Mammary epithelial cell (primary cell): ENCODE measurements at regions of chr12 and their contacts with region 1.

Region 1: DNA sequence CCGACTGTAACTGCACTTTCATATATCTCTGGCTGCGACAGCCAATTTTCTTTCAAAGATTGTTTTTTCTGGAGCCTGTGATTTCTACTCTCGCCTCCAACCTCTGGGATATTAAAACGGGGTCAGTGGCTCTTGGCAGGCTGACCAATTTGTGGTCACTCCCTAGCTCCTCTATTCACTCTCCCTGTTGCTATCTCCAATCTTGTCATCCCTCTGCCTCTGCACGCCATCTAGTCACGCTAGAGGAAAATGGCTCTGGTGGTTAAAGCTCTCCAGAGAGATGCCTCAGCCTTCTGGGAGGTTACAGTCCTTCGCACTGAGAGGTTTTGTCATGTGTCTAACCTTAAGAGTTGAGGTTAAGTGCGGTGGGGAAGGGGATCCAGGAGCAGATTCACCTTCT is 59.8 kb upstream of the CISTR start:
- DNase-seq: no peak
- H3K4me3 ChIP-seq: no peak overlapping the region
- H3K27ac ChIP-seq: no peak overlapping the region
- H3K4me1 ChIP-seq: peaks cover 5% of the 10 kb centered on the region
- H3K27me3 ChIP-seq: no peaks in the 10 kb centered on the region
- CTCF ChIP-seq: no peak

Region 2: DNA sequence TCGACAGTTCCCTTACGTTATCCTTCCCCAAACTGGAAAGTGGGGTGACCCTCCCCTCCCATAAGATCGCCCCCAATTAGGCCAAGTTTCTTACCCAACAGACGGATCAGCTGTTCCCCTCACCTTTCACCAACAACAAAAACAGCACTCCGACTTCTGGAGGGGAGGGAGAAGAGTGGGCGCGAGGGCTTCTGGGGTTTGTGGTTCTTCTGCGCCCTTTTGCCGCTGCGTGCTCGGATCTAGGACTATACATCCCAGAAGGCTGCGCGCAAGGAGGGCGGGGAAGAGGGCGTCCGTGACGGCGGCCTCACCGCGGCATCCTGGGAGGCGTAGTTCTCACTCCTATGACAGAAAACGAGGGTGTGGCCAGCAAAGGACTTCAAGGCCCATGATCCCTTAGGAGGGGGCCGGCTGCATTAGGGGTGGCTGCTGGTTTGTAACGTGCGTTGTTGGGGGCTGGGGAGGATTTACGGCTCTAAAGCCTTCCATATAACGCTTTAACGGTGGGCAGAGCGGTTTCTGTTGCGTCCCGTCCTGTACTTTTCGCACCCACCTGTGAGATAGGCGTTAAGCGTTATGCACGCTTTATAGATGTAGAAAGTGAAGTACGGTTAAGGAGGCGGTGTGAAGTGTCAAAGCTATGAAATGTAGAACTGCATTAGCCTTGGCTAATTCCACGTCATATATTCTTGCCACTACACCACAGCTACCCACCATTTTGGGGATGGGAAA is 84.1 kb before region 1 on chr12 and contains the start of gene CALCOCO1:
- CTCF ChIA-PET with region 1: no interaction called
- dilution Hi-C with region 1: loop called (anchors 5 kb)
- in situ Hi-C with region 1: no loop called
- intact Hi-C with region 1: no loop called
- DNase-seq: peak; percentile 98
- H3K4me3 ChIP-seq: peak within 1 kb of the TSS; percentile 57 to 69 (median 59)
- H3K27ac ChIP-seq: peak within 1 kb of the TSS; percentile 55
- H3K4me1 ChIP-seq: peaks cover 15% of the 10 kb centered on the region
- H3K27me3 ChIP-seq: no peaks in the 10 kb centered on the region
- CTCF ChIP-seq: no peak
- total RNA-seq, gene CALCOCO1: 61.1 to 127 TPM

Region 3: GRCh38 chr12:53856132-53856531 is 44.5 kb after region 1 on chr12:
- CTCF ChIA-PET with region 1: no interaction called
- dilution Hi-C with region 1: no loop called
- in situ Hi-C with region 1: no loop called
- intact Hi-C with region 1: no loop called
- DNase-seq: no peak
- H3K4me3 ChIP-seq: no peak overlapping the region
- H3K27ac ChIP-seq: no peak overlapping the region
- H3K4me1 ChIP-seq: peaks cover 11% of the 10 kb centered on the region
- H3K27me3 ChIP-seq: no peaks in the 10 kb centered on the region
- CTCF ChIP-seq: no peak

Region 4: GRCh38 chr12:53907103-53907502 is 95.5 kb after region 1 on chr12:
- CTCF ChIA-PET with region 1: no interaction called
- dilution Hi-C with region 1: loop called (anchors 5 kb)
- in situ Hi-C with region 1: no loop called
- intact Hi-C with region 1: no loop called
- DNase-seq: no peak
- H3K4me3 ChIP-seq: no peak overlapping the region
- H3K27ac ChIP-seq: no peak overlapping the region
- H3K4me1 ChIP-seq: no peaks in the 10 kb centered on the region
- H3K27me3 ChIP-seq: no peaks in the 10 kb centered on the region
- CTCF ChIP-seq: no peak